Sigmoid colon (tissue), 7 donors: ENCODE measurements at regions of chr3 and their contacts with region 1.

Region 1: GRCh38 chr3:66633402-66634381 is 132.9 kb upstream of the LRIG1 start:
- DNase-seq: no peak
- H3K4me3 ChIP-seq: no peak overlapping the region
- H3K27ac ChIP-seq: no peak overlapping the region
- H3K4me1 ChIP-seq: peaks cover 0 to 10% (median 5%) of the 10 kb centered on the region in 4 donors
- H3K27me3 ChIP-seq: no peaks in the 10 kb centered on the region
- CTCF ChIP-seq: no peak
- EP300 ChIP-seq: no peak
- POLR2A ChIP-seq: no peak

Region 2: GRCh38 chr3:66675366-66675765 is 41.7 kb after region 1 on chr3:
- intact Hi-C with region 1: loop called (anchors 5 kb)
- DNase-seq: no peak
- H3K4me3 ChIP-seq: no peak overlapping the region
- H3K27ac ChIP-seq: no peak overlapping the region
- H3K4me1 ChIP-seq: peaks cover 0 to 19% (median 0%) of the 10 kb centered on the region in 4 donors
- H3K27me3 ChIP-seq: no peaks in the 10 kb centered on the region
- CTCF ChIP-seq: no peak
- EP300 ChIP-seq: no peak
- POLR2A ChIP-seq: no peak